ENCODE measurements at regions of chr6 and their contacts with region 1.

Region 1: GRCh38 chr6:149316798-149317655 is 485 bp upstream of the TAB2 start:
- DNase-seq: peak; percentile 93
- H3K4me3 Mint-ChIP-seq: peak overlapping the region; percentile 93
- H3K27ac Mint-ChIP-seq: peak overlapping the region; percentile 97
- H3K4me1 Mint-ChIP-seq: peaks cover 24% of the 10 kb centered on the region
- H3K27me3 Mint-ChIP-seq: no peaks in the 10 kb centered on the region

Region 2: GRCh38 chr6:149082286-149082707 is 234.7 kb before region 1 on chr6:
- CTCF ChIA-PET with region 1: interaction called, 4 read pairs
- POLR2A ChIA-PET with region 1: interaction called, 16 read pairs
- intact Hi-C with region 1: loop called (anchors 1 kb)
- DNase-seq: peak; percentile 93
- H3K4me3 Mint-ChIP-seq: no peak overlapping the region
- H3K27ac Mint-ChIP-seq: peak overlapping the region; percentile 26
- H3K4me1 Mint-ChIP-seq: peaks cover 79% of the 10 kb centered on the region
- H3K27me3 Mint-ChIP-seq: no peaks in the 10 kb centered on the region

Region 3: DNA sequence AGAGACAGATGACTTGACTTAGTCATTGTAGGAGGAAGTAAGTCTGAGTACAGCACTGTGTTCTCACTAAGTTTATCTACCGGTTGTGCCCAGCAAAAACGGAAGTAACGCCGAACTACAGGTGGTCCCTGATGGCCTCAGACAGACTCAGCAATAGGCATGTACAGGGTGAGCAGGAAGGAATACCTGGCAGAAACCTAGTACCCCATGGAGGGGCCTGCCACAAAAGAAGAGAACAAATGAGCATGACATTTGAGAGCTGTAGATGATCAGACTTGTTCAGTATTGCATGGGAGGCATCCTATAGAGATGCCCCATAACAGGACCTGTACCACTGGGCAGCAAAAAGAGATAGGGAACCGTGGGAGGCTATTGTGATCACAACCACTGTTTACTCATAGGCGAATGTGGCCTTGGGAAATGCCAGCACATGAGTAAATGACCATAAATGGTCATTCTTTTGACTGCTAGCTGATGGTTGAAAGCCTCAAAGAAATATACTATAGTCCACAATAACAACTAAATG is 105.9 kb before region 1 on chr6:
- CTCF ChIA-PET with region 1: no interaction called
- POLR2A ChIA-PET with region 1: interaction called, 8 read pairs
- intact Hi-C with region 1: loop called (anchors 2 kb)
- DNase-seq: peak; percentile 54
- H3K4me3 Mint-ChIP-seq: peak overlapping the region; percentile 53
- H3K27ac Mint-ChIP-seq: no peak overlapping the region
- H3K4me1 Mint-ChIP-seq: peaks cover 22% of the 10 kb centered on the region
- H3K27me3 Mint-ChIP-seq: no peaks in the 10 kb centered on the region

Region 4: GRCh38 chr6:149271348-149272340 is 45.4 kb before region 1 on chr6:
- CTCF ChIA-PET with region 1: no interaction called
- POLR2A ChIA-PET with region 1: no interaction called
- intact Hi-C with region 1: loop called (anchors 1 kb)
- DNase-seq: peak; percentile 85
- H3K4me3 Mint-ChIP-seq: peak overlapping the region; percentile 45
- H3K27ac Mint-ChIP-seq: peak overlapping the region; percentile 93
- H3K4me1 Mint-ChIP-seq: peaks cover 35% of the 10 kb centered on the region
- H3K27me3 Mint-ChIP-seq: no peaks in the 10 kb centered on the region

Region 5: GRCh38 chr6:149389509-149390297 is 72.7 kb after region 1 on chr6:
- CTCF ChIA-PET with region 1: no interaction called
- POLR2A ChIA-PET with region 1: interaction called, 4 read pairs
- intact Hi-C with region 1: loop called (anchors 5 kb)
- DNase-seq: no peak
- H3K4me3 Mint-ChIP-seq: no peak overlapping the region
- H3K27ac Mint-ChIP-seq: peak overlapping the region; percentile 13
- H3K4me1 Mint-ChIP-seq: peaks cover 69% of the 10 kb centered on the region
- H3K27me3 Mint-ChIP-seq: no peaks in the 10 kb centered on the region

Measured in activated CD4-positive, alpha-beta memory T cell treated with anti-CD3 and anti-CD28 coated beads for 36 hours (primary cell).